ENCODE measurements at regions of chr1 and their contacts with region 1.

Region 1: DNA sequence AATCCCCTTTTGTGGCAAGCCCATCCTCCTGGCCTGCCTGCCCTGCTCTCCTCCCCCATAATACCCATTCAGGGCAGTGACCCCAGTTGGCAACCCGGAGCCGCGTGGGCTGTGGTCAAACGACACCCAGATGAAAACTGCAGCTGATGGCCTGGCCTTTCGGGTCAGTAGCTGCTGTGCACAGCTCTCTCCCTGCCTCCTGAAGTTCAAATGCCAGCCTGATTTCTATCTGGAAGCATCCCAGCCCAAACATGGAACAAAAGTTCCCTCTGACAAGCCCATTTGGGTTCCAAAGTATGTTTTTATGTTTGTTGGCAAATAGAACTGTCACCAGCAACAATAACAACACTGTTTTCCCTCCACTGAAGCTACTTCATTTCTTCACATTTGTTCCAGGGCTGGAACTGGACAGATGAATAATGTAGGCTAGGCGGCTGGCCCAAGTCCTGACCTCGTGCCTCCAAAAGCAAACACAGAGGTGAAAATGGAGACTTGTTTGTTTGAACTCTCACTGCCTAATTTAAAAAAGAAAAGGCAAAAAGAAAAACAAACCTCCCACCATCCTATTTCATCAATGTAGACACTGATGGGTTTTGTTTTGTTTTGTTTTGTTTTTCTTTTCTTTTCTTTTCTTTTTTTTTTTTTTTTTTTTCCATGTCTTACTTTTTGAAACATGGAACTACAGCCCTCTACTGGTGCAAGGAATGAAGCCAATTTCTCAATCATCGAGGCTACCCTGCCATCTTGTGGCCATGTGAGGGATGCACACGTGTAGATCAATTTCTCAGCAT is 179.0 kb downstream of the ADSS2 start:
- DNase-seq: peak; percentile 50 to 82 (median 72)
- H3K4me3 ChIP-seq: peak overlapping the region in 12 of 59 donors; percentile 3 to 28 (median 16)
- H3K27ac ChIP-seq: peak overlapping the region in 58 of 59 donors; percentile 16 to 92 (median 81)
- H3K27me3 ChIP-seq: no peaks in the 10 kb centered on the region
- CTCF ChIP-seq: peak; percentile 91 to 100 (median 98)

Region 2: GRCh38 chr1:243471754-243472745 is 800.6 kb before region 1 on chr1:
- intact Hi-C with region 1: loop called (anchors 5 kb)
- DNase-seq: no peak
- H3K4me3 ChIP-seq: peak overlapping the region in 1 of 59 donors; percentile 57
- H3K27ac ChIP-seq: peak overlapping the region in 58 of 59 donors; percentile 4 to 91 (median 76)
- H3K27me3 ChIP-seq: no peaks in the 10 kb centered on the region
- CTCF ChIP-seq: no peak

Region 3: DNA sequence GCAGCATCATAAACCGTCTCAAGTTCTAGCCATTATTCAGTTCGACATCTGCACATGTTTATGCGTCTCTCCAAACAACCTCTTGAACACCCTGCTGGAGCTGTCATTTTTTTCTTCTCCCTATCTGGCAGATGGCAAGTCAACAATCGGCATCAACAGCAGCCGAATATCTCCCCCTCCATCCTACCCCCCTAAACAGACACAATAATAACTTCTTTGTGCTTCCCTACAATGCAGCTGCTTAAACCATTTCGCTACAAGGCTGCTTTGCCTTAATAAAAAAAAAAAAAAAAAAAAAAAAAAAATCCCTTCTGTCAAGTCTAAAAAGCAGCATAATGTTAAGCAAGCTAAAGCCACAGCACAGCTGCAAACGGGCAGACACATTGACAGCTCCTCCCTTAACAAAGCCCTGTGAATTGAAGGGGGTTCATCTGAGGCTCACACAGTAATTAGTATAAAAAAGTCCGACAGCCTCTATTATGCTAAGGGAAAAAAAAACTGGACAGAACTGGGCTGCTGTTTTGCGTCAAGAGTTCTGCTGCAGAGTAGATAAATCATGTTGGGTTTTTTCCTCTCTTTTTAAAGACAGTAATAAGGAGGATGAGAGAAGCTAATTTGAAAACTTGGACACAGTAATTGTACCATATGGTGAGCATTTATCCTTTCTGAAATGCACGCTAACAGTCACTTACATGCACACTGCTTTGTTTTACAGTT is 559.0 kb before region 1 on chr1:
- intact Hi-C with region 1: loop called (anchors 2 kb)
- DNase-seq: peak in 5 of 10 donors; percentile 44 to 74 (median 54)
- H3K4me3 ChIP-seq: peak overlapping the region in 58 of 59 donors; percentile 2 to 62 (median 42)
- H3K27ac ChIP-seq: peak overlapping the region; percentile 20 to 90 (median 79)
- H3K27me3 ChIP-seq: no peaks in the 10 kb centered on the region
- CTCF ChIP-seq: peak in 2 of 56 donors; percentile 3 to 11

Region 4: GRCh38 chr1:243763806-243764205 is 508.9 kb before region 1 on chr1:
- intact Hi-C with region 1: loop called in 1 of 2 experiments (anchors 10 kb)
- DNase-seq: no peak
- H3K4me3 ChIP-seq: peak overlapping the region in 1 of 59 donors; percentile 30
- H3K27ac ChIP-seq: no peak overlapping the region
- H3K27me3 ChIP-seq: no peaks in the 10 kb centered on the region
- CTCF ChIP-seq: peak in 21 of 56 donors; percentile 12 to 39 (median 25)

Region 5: GRCh38 chr1:244047621-244048471 is 224.8 kb before region 1 on chr1:
- intact Hi-C with region 1: loop called (anchors 1 to 2 kb)
- DNase-seq: peak; percentile 54 to 100 (median 98)
- H3K4me3 ChIP-seq: peak overlapping the region; percentile 60 to 99 (median 91)
- H3K27ac ChIP-seq: peak overlapping the region; percentile 88 to 100 (median 99)
- H3K27me3 ChIP-seq: no peaks in the 10 kb centered on the region
- CTCF ChIP-seq: peak in 25 of 56 donors; percentile 4 to 39 (median 23)

Region 6: DNA sequence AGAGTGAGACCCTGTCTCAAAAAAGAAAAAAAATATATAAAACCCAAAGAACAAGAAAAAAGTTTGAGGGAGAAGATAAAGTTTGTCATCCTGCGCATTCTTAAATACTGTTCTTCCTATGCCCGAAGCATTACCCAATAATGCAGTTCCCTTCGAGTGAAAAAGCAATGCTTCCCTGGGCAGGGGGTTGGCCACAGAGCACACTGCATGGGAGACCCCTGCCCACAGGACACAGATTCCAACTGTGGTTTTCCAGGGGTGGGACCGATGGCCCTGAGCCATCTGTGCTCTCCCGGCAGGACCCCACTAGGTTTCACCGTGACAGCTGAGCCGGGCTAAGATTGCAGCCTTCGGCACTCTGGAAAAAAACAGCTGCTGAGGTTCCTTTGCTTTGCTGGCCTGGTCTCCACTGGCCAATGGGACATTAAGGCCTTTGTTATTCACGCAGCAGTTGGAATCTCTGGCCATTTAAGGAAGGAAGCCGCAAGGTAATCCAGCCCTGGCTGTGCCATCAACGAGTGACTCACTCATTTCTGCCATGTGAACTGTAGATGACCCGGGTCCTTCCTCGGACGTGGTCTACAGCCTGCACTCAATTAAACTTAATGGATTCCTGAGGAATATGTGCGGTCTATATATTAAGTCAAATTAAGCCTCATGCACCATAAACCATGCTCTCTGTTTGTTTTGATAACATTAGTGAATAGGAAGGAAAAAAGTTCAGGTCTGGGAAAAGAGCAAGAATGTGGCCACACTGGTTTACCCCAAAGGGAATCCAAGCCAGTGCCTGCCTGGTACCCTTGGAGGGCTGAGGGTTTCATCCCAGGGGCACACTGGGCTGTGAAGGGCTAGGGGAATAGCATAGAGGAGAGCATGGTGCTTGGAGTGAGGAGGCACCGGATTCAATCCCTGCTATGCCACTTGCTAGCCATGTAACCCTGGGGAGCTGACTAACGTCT is 58.4 kb before region 1 on chr1:
- intact Hi-C with region 1: loop called (anchors 2 to 5 kb)
- DNase-seq: no peak
- H3K4me3 ChIP-seq: no peak overlapping the region
- H3K27ac ChIP-seq: no peak overlapping the region
- H3K27me3 ChIP-seq: no peaks in the 10 kb centered on the region
- CTCF ChIP-seq: no peak

Measured in dorsolateral prefrontal cortex (tissue), 120 donors.